ENCODE measurements at regions of chr3 and their contacts with region 1.

Region 1: GRCh38 chr3:30658328-30659052 is 52.1 kb downstream of the TGFBR2 start:
- DNase-seq: peak in 8 of 10 donors; percentile 41 to 86 (median 76)
- ATAC-seq: peak; percentile 55 to 66
- H3K4me3 Mint-ChIP-seq: peak overlapping the region; percentile 52 to 94 (median 72)
- H3K27ac Mint-ChIP-seq: peak overlapping the region; percentile 94 to 100 (median 98)
- H3K4me1 Mint-ChIP-seq: peaks cover 51 to 99% (median 96%) of the 10 kb centered on the region in 4 donors
- H3K27me3 Mint-ChIP-seq: no peaks in the 10 kb centered on the region

Region 2: DNA sequence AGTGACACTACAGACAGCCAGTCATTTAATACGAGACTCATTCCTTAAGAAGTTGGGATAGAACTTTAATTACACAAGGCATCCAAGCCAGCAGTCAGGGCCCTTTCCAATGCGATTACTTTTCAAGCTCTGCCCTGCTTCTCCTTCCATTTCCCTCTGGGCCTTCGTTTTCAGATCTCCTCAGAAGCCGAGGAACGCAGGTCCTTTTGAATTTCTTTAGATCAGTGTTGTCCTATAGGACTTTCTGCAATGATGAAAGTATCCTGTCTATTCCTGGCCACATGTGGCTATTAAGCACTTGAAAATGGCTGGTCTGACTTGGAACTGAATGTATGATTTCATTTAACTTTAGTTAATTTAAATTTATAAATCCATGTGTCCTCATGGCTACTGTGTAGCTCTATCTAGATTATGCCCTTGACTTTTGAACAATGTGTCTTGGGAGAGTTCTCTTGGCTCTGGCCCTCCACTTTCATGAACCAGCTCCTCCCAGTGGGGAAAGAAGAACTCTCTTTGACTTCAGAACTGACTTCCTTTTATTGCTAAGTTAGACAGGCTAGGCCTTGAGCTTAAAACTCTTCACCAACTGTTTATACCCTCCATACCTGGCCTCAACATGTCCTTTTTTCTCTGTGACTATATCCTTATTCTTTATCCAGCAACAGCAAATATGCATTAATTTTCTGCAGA is 29.4 kb before region 1 on chr3:
- POLR2A ChIA-PET with region 1: interaction called, 307 read pairs
- DNase-seq: peak in 1 of 10 donors; percentile 48
- ATAC-seq: peak; percentile 7 to 22
- H3K4me3 Mint-ChIP-seq: peak overlapping the region; percentile 38 to 82 (median 76)
- H3K27ac Mint-ChIP-seq: peak overlapping the region; percentile 91 to 100 (median 96)
- H3K4me1 Mint-ChIP-seq: peaks cover 46 to 99% (median 87%) of the 10 kb centered on the region in 4 donors
- H3K27me3 Mint-ChIP-seq: no peaks in the 10 kb centered on the region

Region 3: GRCh38 chr3:30644593-30645012 is 13.9 kb before region 1 on chr3:
- POLR2A ChIA-PET with region 1: interaction called, 307 read pairs
- DNase-seq: peak in 8 of 10 donors; percentile 47 to 75 (median 65)
- ATAC-seq: peak; percentile 72 to 76
- H3K4me3 Mint-ChIP-seq: peak overlapping the region; percentile 60 to 87 (median 80)
- H3K27ac Mint-ChIP-seq: peak overlapping the region; percentile 91 to 100 (median 96)
- H3K4me1 Mint-ChIP-seq: peaks cover 52 to 98% (median 89%) of the 10 kb centered on the region in 4 donors
- H3K27me3 Mint-ChIP-seq: no peaks in the 10 kb centered on the region

Region 4: DNA sequence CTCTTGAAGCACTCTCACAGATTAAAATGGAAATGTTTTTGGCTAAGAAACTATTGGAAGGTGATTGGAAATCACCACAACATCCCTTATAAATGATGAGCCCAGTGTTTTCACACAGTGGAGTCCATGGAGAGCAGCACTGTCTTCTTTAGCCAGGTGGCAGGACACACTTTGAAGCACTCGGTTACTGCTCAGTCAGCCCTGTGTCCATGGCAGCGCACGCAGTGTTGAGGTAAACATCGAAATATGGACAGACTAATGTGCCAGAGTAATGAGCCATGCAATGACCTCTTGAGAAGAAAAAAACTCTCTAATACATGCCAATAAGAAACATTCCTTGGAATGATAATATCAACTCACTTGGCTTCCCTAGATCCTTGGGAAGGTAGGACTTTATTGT is 14.5 kb after region 1 on chr3:
- POLR2A ChIA-PET with region 1: interaction called, 170 read pairs
- DNase-seq: no peak
- ATAC-seq: no peak
- H3K4me3 Mint-ChIP-seq: peak overlapping the region in 9 of 10 donors; percentile 19 to 71 (median 50)
- H3K27ac Mint-ChIP-seq: peak overlapping the region; percentile 76 to 100 (median 84)
- H3K4me1 Mint-ChIP-seq: peaks cover 62 to 99% (median 98%) of the 10 kb centered on the region in 4 donors
- H3K27me3 Mint-ChIP-seq: no peaks in the 10 kb centered on the region

Region 5: GRCh38 chr3:30681643-30682211 is 23.2 kb after region 1 on chr3:
- POLR2A ChIA-PET with region 1: interaction called, 48 read pairs
- DNase-seq: no peak
- ATAC-seq: peak; percentile 52 to 66
- H3K4me3 Mint-ChIP-seq: peak overlapping the region; percentile 13 to 94 (median 68)
- H3K27ac Mint-ChIP-seq: peak overlapping the region; percentile 75 to 100 (median 91)
- H3K4me1 Mint-ChIP-seq: peaks cover 56 to 98% (median 96%) of the 10 kb centered on the region in 4 donors
- H3K27me3 Mint-ChIP-seq: no peaks in the 10 kb centered on the region

Region 6: DNA sequence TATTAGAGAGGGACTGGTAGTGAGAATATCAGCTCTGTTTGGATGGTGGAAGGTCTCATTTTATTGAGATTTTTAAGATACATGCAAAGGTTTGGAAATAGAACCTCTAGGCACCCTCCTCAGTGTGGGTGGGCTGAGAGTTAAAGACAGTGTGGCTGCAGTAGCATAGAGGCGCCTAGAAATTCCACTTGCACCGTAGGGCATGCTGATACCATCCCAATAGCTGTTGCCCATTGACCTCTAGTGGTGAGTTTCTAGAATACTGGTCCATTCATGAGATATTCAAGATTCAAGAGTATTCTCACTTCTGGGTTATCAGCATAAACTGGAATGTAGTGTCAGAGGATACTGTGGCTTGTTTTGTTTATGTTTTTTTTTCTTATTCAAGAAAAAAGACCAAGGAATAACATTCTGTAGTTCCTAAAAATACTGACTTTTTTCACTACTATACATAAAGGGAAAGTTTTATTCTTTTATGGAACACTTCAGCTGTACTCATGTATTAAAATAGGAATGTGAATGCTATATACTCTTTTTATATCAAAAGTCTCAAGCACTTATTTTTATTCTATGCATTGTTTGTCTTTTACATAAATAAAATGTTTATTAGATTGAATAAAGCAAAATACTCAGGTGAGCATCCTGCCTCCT is 35.1 kb after region 1 on chr3:
- POLR2A ChIA-PET with region 1: interaction called, 27 read pairs
- DNase-seq: peak in 9 of 10 donors; percentile 25 to 75 (median 62)
- ATAC-seq: peak; percentile 75 to 87
- H3K4me3 Mint-ChIP-seq: peak overlapping the region in 6 of 10 donors; percentile 10 to 70 (median 42)
- H3K27ac Mint-ChIP-seq: peak overlapping the region; percentile 4 to 100 (median 89)
- H3K4me1 Mint-ChIP-seq: peaks cover 39 to 93% (median 85%) of the 10 kb centered on the region in 4 donors
- H3K27me3 Mint-ChIP-seq: no peaks in the 10 kb centered on the region

Region 7: DNA sequence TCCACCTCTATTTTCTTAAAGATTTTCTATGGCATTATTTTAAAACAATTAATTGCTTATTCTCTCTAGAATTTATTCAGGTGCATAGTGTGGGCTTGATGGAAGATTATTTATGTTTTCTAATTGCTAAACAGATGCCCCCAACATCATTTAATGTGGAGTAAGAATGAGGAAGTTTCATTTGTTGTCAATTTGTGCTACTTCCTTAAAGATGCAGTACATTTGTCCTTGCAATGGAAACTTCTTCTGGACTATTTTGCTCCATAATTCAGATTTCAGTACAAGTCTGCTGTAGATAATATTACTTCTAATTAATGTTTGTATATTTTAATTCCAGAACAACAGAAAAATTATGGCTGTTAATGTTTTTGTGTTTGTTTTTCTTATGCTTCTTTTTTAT is 52.7 kb after region 1 on chr3:
- POLR2A ChIA-PET with region 1: no interaction called
- DNase-seq: no peak
- ATAC-seq: no peak
- H3K4me3 Mint-ChIP-seq: no peak overlapping the region
- H3K27ac Mint-ChIP-seq: no peak overlapping the region
- H3K4me1 Mint-ChIP-seq: peaks cover 10 to 38% (median 27%) of the 10 kb centered on the region in 4 donors
- H3K27me3 Mint-ChIP-seq: no peaks in the 10 kb centered on the region